Dorsolateral prefrontal cortex (tissue), 120 donors: ENCODE measurements at regions of chr1 and their contacts with region 1.

Region 1: DNA sequence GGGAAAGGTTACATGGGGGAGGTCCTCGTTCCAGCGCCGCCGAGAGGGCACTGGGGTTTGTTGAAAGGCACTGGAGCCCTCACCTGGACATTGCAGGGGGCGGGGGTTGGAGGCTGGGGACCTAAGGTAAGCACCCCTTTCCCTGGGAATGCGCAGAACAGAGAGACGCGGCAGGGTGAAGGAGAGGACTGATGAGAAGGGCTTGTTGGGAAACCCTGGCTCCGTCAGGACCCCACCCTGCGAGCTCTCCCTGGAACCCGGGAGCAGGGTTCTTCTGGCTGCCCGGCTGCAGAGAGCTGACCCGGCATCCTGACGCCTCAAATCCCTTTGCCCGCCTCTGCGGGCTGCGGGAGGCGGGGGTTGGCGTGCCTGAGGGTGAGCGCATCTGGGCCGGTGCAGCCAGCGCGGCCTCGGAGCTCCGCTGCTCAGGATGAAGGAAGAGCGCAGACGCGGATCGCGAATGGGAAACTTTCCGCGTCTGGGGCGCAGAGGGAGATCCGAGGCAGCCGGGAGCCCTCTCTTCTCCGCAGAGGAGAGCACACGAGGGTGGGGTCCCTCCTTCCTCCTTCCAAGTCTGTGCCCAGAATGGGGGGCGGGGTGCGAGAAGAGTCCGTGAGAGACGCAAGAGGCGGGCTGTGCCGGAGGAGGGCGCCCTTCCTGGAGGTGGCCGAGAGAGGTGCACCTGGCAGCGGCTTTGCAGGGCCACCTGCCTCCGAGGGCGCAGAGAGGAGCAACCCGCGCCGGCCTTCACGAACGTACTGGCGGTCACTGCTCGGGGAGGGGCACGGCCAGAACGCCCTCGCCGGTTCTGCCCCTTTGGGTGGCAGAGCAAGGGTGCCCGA is 2.4 kb downstream of the IGSF21 start:
- DNase-seq: peak in 9 of 10 donors; percentile 48 to 85 (median 77)
- H3K4me3 ChIP-seq: peak overlapping the region; percentile 36 to 71 (median 56)
- H3K27ac ChIP-seq: peak overlapping the region in 54 of 59 donors; percentile 11 to 91 (median 74)
- H3K27me3 ChIP-seq: peaks cover 0 to 44% (median 14%) of the 10 kb centered on the region in 45 donors
- CTCF ChIP-seq: peak in 54 of 56 donors; percentile 10 to 63 (median 50)

Region 2: DNA sequence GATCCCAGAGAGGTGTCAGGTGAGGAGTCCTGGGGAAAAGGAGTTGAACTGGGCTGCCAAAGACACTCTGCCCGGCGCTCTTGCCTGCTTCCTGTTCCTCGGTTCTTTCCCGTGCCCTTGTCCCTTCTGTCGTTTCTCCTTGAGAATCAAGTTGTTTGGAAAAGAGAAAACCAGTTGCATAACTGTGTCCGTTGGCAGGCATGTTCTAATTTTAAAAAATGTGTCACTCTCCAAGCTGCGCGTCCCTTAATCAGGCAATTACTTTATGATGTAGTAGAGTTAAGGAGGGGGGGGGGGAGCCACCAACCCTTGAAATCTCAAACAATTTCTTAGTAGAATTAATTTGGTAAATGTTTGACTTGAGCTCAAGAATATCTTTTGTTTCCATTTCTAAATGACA is 108.3 kb before region 1 on chr1:
- intact Hi-C with region 1: loop called in 1 of 2 experiments (anchors 5 kb)
- DNase-seq: no peak
- H3K4me3 ChIP-seq: no peak overlapping the region
- H3K27ac ChIP-seq: peak overlapping the region in 7 of 59 donors; percentile 15 to 58 (median 33)
- H3K27me3 ChIP-seq: peaks cover 0 to 2% (median 0%) of the 10 kb centered on the region in 45 donors
- CTCF ChIP-seq: no peak

Region 3: GRCh38 chr1:18199462-18199861 is 89.5 kb after region 1 on chr1:
- intact Hi-C with region 1: loop called in 1 of 2 experiments (anchors 5 kb)
- DNase-seq: peak in 1 of 10 donors; percentile 67
- H3K4me3 ChIP-seq: no peak overlapping the region
- H3K27ac ChIP-seq: peak overlapping the region in 24 of 59 donors; percentile 4 to 88 (median 52)
- H3K27me3 ChIP-seq: peaks cover 0 to 6% (median 0%) of the 10 kb centered on the region in 45 donors
- CTCF ChIP-seq: no peak

Region 4: GRCh38 chr1:18229625-18230024 is 119.6 kb after region 1 on chr1:
- intact Hi-C with region 1: loop called (anchors 2 to 10 kb)
- DNase-seq: no peak
- H3K4me3 ChIP-seq: no peak overlapping the region
- H3K27ac ChIP-seq: peak overlapping the region in 17 of 59 donors; percentile 3 to 80 (median 64)
- H3K27me3 ChIP-seq: no peaks in the 10 kb centered on the region
- CTCF ChIP-seq: no peak

Region 5: GRCh38 chr1:18234790-18235242 is 124.8 kb after region 1 on chr1:
- intact Hi-C with region 1: loop called (anchors 2 to 10 kb)
- DNase-seq: peak in 5 of 10 donors; percentile 39 to 64 (median 43)
- H3K4me3 ChIP-seq: no peak overlapping the region
- H3K27ac ChIP-seq: no peak overlapping the region
- H3K27me3 ChIP-seq: no peaks in the 10 kb centered on the region
- CTCF ChIP-seq: peak; percentile 48 to 90 (median 77)